Activated CD8-positive, alpha-beta T cell treated with anti-CD3 and anti-CD28 coated beads for 36 hours (primary cell): ENCODE measurements at regions of chr1 and their contacts with region 1.

Region 1: GRCh38 chr1:205430696-205431305 is 8.9 kb upstream of the LEMD1 start:
- DNase-seq: peak; percentile 70
- ATAC-seq: peak; percentile 87
- H3K4me3 Mint-ChIP-seq: peak overlapping the region; percentile 74
- H3K27ac Mint-ChIP-seq: no peak overlapping the region
- H3K4me1 Mint-ChIP-seq: peaks cover 7% of the 10 kb centered on the region
- H3K27me3 Mint-ChIP-seq: no peaks in the 10 kb centered on the region
- CTCF ChIP-seq: peak; percentile 82

Region 2: DNA sequence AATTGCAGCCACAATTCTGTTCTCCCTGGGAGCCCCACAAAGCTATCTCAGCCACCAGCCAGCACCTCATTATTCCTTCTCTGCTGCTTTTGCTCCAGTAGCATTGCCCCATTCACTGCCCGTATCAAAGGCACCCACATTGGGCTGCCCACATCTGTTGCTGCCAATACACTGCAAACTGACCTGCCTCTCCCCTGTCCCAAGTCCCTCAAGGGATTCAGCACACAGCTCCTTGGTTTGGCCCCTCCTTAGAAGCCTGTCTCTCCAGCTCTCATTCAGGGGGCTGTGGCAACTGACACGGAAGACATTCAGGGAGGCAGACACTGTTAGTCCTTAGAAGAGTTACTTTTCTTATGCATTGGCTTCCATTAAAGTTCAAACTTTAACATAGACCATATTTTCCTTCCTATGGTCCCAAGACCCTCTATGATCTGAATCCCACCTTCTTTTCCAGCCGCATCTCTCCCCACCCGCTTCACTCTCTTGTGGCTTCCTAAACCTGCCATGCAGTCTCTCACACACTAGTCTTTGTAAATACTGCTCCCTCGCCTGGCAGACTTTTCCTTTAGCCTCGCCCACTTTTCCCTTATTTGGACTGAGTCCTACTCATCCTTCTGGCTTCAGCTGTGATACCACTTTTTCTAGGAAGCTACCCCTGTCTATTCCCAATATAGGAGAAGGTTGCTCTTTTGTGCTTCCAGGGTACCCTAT is 54.8 kb before region 1 on chr1:
- CTCF ChIA-PET with region 1: no interaction called
- POLR2A ChIA-PET with region 1: no interaction called
- intact Hi-C with region 1: no loop called
- DNase-seq: no peak
- ATAC-seq: no peak
- H3K4me3 Mint-ChIP-seq: no peak overlapping the region
- H3K27ac Mint-ChIP-seq: no peak overlapping the region
- H3K4me1 Mint-ChIP-seq: peaks cover 11% of the 10 kb centered on the region
- H3K27me3 Mint-ChIP-seq: peaks cover 18% of the 10 kb centered on the region
- CTCF ChIP-seq: no peak

Region 3: DNA sequence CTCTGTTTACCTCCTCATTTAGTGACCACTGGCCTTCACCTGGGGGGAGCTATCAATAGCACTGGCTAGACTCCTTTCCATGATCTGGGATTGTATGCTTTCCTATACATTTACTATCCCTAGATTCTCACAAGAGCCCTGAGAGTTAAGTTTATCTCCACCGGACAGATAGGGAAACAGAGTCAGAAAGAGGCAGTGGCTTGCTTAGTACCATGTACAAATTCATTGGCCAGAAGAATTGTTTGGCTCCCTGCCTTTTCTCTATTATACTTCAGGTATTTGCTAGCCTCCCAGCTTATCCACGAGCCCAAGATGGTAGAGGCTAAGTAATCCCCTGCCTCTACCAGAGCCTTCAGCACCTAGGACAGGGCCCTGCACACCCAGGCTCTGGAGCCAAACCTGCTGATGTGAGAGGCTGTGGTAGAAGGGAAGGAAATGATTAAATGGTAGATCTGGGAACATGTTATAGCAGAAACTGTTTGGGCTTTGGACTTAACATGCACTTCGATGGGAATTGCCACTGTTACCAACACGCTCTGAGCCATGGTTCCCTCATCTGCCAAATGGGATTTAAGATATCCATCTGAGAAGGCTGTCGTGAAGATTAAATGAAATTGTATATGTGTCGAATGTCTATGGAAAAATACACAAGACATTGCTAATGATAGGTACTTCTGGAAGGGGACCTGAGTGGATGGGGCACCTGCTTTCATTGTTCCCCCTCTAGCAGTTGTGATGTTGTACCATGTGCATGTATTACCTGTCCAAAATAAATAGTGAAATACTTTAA is 28.2 kb after region 1 on chr1:
- CTCF ChIA-PET with region 1: interaction called, 11 read pairs
- POLR2A ChIA-PET with region 1: interaction called, 3 read pairs
- intact Hi-C with region 1: no loop called
- DNase-seq: peak; percentile 63
- ATAC-seq: peak; percentile 70
- H3K4me3 Mint-ChIP-seq: no peak overlapping the region
- H3K27ac Mint-ChIP-seq: no peak overlapping the region
- H3K4me1 Mint-ChIP-seq: peaks cover 10% of the 10 kb centered on the region
- H3K27me3 Mint-ChIP-seq: peaks cover 43% of the 10 kb centered on the region
- CTCF ChIP-seq: no peak

Region 4: GRCh38 chr1:205470131-205470530 is 39.3 kb after region 1 on chr1:
- CTCF ChIA-PET with region 1: no interaction called
- POLR2A ChIA-PET with region 1: no interaction called
- intact Hi-C with region 1: no loop called
- DNase-seq: no peak
- ATAC-seq: no peak
- H3K4me3 Mint-ChIP-seq: no peak overlapping the region
- H3K27ac Mint-ChIP-seq: no peak overlapping the region
- H3K4me1 Mint-ChIP-seq: peaks cover 7% of the 10 kb centered on the region
- H3K27me3 Mint-ChIP-seq: peaks cover 31% of the 10 kb centered on the region
- CTCF ChIP-seq: no peak

Region 5: DNA sequence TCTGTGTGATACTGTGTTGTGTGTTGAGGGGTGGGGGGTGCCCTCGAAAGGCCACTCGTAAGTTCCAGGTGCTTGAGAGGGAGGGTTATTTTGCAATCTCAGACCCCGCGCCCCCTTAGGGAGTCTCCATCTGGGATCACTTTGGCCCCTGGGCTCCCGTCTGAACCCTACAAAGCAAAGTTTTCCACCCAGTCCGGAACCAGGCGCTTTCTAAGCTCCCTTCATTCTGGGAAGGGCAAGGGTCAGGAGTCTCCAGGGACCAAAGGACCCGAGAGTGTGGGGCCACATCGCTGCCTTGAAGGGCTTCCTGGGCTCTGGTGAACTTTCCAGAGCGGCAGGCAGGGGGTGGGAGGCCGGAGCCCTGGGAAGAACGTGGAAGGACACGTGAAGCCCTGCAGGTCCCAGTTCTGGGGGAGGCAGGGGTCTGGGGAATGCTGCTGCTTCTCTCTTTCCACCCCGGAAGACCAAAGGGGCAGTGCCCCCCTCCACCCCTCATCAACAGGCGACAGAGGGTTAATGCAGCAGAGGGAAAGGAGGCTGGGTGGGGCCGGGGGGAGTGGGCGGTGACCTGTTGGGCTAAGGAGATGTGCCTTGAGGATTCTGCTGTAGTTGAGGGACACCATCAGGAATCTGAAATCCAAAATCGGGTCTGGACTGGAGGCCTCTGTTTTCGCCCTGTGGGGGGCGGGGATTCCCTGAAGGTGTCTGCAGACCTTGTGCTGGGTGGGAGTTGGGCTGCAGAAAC is 74.4 kb after region 1 on chr1:
- CTCF ChIA-PET with region 1: no interaction called
- POLR2A ChIA-PET with region 1: no interaction called
- intact Hi-C with region 1: no loop called
- DNase-seq: peak; percentile 40
- ATAC-seq: no peak
- H3K4me3 Mint-ChIP-seq: peak overlapping the region; percentile 73
- H3K27ac Mint-ChIP-seq: no peak overlapping the region
- H3K4me1 Mint-ChIP-seq: peaks cover 12% of the 10 kb centered on the region
- H3K27me3 Mint-ChIP-seq: no peaks in the 10 kb centered on the region
- CTCF ChIP-seq: no peak

Region 6: GRCh38 chr1:205711104-205712020 is 280.6 kb after region 1 on chr1:
- CTCF ChIA-PET with region 1: no interaction called
- POLR2A ChIA-PET with region 1: no interaction called
- intact Hi-C with region 1: no loop called
- DNase-seq: peak; percentile 83
- ATAC-seq: peak; percentile 87
- H3K4me3 Mint-ChIP-seq: no peak overlapping the region
- H3K27ac Mint-ChIP-seq: peak overlapping the region; percentile 32
- H3K4me1 Mint-ChIP-seq: peaks cover 12% of the 10 kb centered on the region
- H3K27me3 Mint-ChIP-seq: no peaks in the 10 kb centered on the region
- CTCF ChIP-seq: peak; percentile 91